Panc1 (cell line): ENCODE measurements at regions of chr14 and their contacts with region 1.

Region 1: DNA sequence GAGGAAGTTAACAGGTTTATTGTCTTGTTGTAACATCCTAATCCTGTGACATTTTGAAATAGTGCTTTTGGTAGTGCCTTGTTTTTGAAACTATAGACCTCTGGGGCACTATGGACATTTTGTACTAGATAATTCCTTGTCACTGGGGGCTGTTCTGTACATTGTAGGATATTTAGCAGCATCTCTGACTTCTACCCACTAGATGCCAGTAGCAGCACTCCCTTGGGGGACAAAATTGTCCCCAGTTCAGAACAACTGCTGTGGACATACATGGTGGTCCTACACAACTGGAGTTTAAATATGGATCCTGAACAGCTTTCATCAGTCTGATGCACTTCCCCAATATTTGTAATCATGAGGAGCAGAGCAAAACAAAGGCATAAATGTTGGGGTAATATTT is 264.7 kb downstream of the RAD51B start:
- DNase-seq: no peak
- ATAC-seq: no peak
- H3K4me3 ChIP-seq: no peak overlapping the region
- H3K27ac ChIP-seq: peak overlapping the region; percentile 74; the same call in 1 of the 2 replicates
- H3K4me1 ChIP-seq: peaks cover 7% of the 10 kb centered on the region
- H3K27me3 ChIP-seq: no peaks in the 10 kb centered on the region
- CTCF ChIP-seq: peak; percentile 48

Region 2: DNA sequence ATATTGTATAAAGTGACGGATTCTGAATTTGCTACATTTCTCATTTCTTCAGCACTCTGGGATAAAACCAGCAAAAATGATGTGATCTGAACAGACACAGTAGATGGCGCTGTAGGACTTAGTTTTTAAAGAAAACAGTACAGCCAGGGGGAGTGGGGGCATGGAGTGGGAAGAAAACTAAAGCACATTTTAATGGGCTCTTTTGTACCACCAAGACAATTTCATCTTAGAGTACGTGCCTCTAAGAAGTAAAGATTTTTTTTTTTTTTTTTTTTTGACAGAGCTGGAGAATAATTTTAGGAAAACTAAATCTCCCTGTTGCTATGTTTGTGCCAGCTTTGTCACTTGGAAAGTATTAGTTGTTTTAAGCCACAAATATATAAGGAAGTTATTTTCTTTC is 140.3 kb before region 1 on chr14:
- CTCF ChIA-PET with region 1: no interaction called
- POLR2A ChIA-PET with region 1: no interaction called
- in situ Hi-C with region 1: no loop called
- intact Hi-C with region 1: loop called (anchors 10 kb)
- DNase-seq: peak; percentile 57
- ATAC-seq: peak; percentile 86
- H3K4me3 ChIP-seq: no peak overlapping the region
- H3K27ac ChIP-seq: peak overlapping the region; percentile 87; the same call in 1 of the 2 replicates
- H3K4me1 ChIP-seq: peaks cover 36% of the 10 kb centered on the region
- H3K27me3 ChIP-seq: no peaks in the 10 kb centered on the region
- CTCF ChIP-seq: peak; percentile 58; the same call in 1 of the 2 replicates